ENCODE measurements at regions of chr15 and their contacts with region 1.

Region 1: DNA sequence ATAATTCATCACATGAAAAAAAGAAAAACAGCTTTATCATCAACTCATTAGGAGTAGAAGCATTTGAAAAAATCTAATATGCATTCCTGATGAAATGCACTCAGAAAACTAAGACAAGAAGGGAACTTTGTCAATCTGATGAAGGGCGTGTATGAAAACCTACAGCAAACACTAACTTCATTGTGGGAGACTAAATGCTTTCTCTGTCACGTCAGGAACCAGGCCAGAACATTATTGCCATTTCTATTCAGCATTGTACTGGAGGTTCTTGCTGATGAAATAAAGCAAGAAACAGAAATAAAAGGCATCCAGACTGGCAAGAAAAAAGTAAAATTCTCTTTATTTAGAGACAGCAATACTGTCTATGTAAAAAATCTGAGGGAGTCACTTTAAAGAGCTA is 235.2 kb downstream of the GABRB3 start:
- DNase-seq: no peak
- H3K4me3 ChIP-seq: no peak overlapping the region
- H3K27ac ChIP-seq: no peak overlapping the region
- H3K4me1 ChIP-seq: no peaks in the 10 kb centered on the region
- H3K27me3 ChIP-seq: no peaks in the 10 kb centered on the region
- CTCF ChIP-seq: no peak
- EP300 ChIP-seq: no peak
- POLR2A ChIP-seq: no peak

Region 2: GRCh38 chr15:26481338-26481737 is 56.3 kb before region 1 on chr15:
- intact Hi-C with region 1: loop called (anchors 5 kb)
- DNase-seq: no peak
- H3K4me3 ChIP-seq: no peak overlapping the region
- H3K27ac ChIP-seq: no peak overlapping the region
- H3K4me1 ChIP-seq: no peaks in the 10 kb centered on the region
- H3K27me3 ChIP-seq: no peaks in the 10 kb centered on the region
- CTCF ChIP-seq: no peak
- EP300 ChIP-seq: no peak
- POLR2A ChIP-seq: no peak

Region 3: DNA sequence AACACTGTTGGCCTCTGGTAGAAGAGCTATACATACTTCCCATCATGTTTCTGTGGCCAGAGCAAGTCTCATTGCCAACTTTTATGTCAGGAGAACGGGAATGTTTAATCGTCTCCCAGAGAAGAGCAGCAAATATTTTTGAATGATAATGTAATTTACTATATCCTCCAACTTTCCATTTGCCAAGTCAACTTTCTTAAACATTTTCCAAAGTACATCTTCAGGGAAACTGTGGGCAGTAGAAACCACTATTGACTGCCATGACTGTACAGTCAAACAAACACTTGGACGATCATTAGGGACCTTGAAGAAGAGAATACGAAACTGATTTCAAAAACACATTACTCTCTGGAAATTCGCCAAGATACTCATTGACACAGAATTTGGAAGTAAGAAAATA is 33.7 kb after region 1 on chr15:
- intact Hi-C with region 1: no loop called
- DNase-seq: no peak
- H3K4me3 ChIP-seq: no peak overlapping the region
- H3K27ac ChIP-seq: no peak overlapping the region
- H3K4me1 ChIP-seq: no peaks in the 10 kb centered on the region
- H3K27me3 ChIP-seq: no peaks in the 10 kb centered on the region
- CTCF ChIP-seq: no peak
- EP300 ChIP-seq: no peak
- POLR2A ChIP-seq: no peak